ENCODE measurements at regions of chr4 and their contacts with region 1.

Region 1: GRCh38 chr4:158729716-158730559 is 6.7 kb upstream of the PPID start:
- DNase-seq: peak; percentile 82
- H3K4me3 ChIP-seq: no peak overlapping the region
- H3K27ac ChIP-seq: no peak overlapping the region
- H3K4me1 ChIP-seq: no peaks in the 10 kb centered on the region
- H3K27me3 ChIP-seq: peaks cover 9% of the 10 kb centered on the region; the same call in 1 of the 2 replicates

Region 2: GRCh38 chr4:158410272-158410671 is 319.7 kb before region 1 on chr4:
- in situ Hi-C with region 1: no loop called
- DNase-seq: peak; percentile 49
- H3K4me3 ChIP-seq: no peak overlapping the region
- H3K27ac ChIP-seq: no peak overlapping the region
- H3K4me1 ChIP-seq: no peaks in the 10 kb centered on the region
- H3K27me3 ChIP-seq: no peaks in the 10 kb centered on the region

Region 3: GRCh38 chr4:158845311-158846041 is 115.5 kb after region 1 on chr4:
- in situ Hi-C with region 1: loop called (anchors 5 kb)
- DNase-seq: no peak
- H3K4me3 ChIP-seq: no peak overlapping the region
- H3K27ac ChIP-seq: no peak overlapping the region
- H3K4me1 ChIP-seq: no peaks in the 10 kb centered on the region
- H3K27me3 ChIP-seq: no peaks in the 10 kb centered on the region